ENCODE measurements at regions of chr11 and their contacts with region 1.

Region 1: GRCh38 chr11:76761718-76762355 is 21.3 kb upstream of the TSKU start:
- DNase-seq: no peak
- H3K4me3 ChIP-seq: no peak overlapping the region
- H3K27ac ChIP-seq: no peak overlapping the region
- H3K4me1 ChIP-seq: peaks cover 40% of the 10 kb centered on the region
- H3K27me3 ChIP-seq: no peaks in the 10 kb centered on the region
- CTCF ChIP-seq: no peak

Region 2: DNA sequence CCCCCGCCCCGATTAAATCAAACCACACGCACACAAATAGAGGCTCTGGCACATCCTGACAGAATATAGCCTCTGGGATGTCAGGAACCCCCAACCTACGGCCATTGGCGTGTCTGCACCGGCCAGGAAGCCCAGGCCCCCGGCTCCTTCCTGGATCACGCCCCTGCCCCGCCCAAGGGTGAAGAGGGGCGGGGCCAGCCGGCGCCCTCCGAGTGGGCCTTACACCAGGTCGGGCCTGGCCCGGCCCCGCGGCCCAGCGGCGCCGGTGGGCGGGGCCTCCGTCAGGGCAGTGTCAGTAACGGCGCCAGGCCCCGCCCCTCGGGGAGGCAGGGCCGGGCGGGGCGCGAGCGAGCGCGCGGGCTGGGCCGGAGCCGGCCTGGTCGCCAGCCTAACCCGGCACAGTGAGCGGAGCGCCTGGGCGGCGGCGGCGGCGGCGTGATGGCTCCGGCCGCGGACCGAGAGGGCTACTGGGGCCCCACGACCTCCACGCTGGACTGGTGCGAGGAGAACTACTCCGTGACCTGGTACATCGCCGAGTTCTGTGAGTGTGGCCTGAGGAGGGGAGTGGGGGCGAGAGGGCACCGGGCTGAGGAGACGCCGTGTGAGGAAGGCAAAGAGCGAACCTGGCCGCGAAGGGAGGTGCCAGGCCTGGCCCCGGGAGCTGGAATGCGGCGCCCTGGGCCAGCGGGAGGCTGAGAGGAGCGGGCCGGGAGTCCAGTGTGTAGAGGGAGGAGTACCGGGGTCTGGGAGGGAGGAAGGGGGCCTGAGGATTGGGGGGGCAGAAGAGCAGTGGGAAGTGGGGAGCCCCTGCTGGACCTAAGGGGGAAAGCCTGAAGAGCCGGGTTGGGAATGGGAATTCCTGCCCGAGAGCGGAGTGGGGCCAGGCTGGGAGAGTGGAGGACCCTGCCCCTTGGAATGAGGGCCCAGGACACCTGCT is 99.0 kb after region 1 on chr11 and contains the start of gene ACER3:
- CTCF ChIA-PET with region 1: no interaction called
- POLR2A ChIA-PET with region 1: interaction called, 13 read pairs
- intact Hi-C with region 1: no loop called
- DNase-seq: peak; percentile 69 to 96
- H3K4me3 ChIP-seq: peak within 1 kb of the TSS; percentile 94
- H3K27ac ChIP-seq: no peak within 1 kb of the TSS
- H3K4me1 ChIP-seq: peaks cover 20% of the 10 kb centered on the region
- H3K27me3 ChIP-seq: no peaks in the 10 kb centered on the region
- CTCF ChIP-seq: peak; percentile 45; the same call in 1 of the 2 replicates
- total RNA-seq, gene ACER3: 15.8 and 21.3 TPM in 2 replicates

Region 3: DNA sequence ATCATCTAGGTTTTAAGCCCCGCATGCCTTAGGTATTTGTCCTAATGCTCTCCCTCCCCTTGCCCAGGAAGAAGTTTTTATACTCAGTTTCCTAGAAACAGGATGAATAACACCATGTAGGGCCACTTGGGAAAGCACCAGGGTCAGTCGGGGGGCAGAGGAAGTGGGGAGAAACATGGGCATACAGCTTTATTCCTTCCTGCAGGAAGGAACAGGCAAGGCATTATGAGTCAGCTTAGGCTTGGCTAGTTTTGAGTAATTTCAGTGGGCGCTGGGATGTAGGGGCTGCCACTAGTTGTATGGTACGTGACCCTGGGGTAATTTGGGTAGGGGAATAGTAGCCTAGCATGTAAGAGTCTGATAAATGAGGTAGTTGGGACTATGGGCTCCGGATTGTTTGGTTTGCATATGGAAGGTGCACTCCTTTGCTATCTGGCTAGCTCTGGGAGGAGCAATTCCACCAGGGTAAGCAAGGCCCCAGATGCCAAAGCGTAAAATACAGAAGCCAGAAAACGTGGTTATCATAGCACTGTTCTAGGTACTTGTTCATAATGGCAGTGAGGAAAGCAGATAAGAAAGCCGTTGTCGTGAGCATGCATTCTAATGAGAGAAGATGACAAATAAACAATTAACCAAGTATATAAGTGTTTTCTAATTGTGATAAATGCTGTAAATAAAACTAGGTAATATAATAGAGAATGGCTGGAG is 123.7 kb after region 1 on chr11:
- CTCF ChIA-PET with region 1: no interaction called
- POLR2A ChIA-PET with region 1: interaction called, 18 read pairs
- intact Hi-C with region 1: no loop called
- DNase-seq: no peak
- H3K4me3 ChIP-seq: no peak overlapping the region
- H3K27ac ChIP-seq: no peak overlapping the region
- H3K4me1 ChIP-seq: peaks cover 6% of the 10 kb centered on the region; the same call in 1 of the 2 replicates
- H3K27me3 ChIP-seq: no peaks in the 10 kb centered on the region
- CTCF ChIP-seq: no peak

Measured in PC-9 (cell line).